Activated CD4-positive, alpha-beta memory T cell treated with anti-CD3 and anti-CD28 coated beads for 36 hours (primary cell): ENCODE measurements at regions of chr11 and their contacts with region 1.

Region 1: DNA sequence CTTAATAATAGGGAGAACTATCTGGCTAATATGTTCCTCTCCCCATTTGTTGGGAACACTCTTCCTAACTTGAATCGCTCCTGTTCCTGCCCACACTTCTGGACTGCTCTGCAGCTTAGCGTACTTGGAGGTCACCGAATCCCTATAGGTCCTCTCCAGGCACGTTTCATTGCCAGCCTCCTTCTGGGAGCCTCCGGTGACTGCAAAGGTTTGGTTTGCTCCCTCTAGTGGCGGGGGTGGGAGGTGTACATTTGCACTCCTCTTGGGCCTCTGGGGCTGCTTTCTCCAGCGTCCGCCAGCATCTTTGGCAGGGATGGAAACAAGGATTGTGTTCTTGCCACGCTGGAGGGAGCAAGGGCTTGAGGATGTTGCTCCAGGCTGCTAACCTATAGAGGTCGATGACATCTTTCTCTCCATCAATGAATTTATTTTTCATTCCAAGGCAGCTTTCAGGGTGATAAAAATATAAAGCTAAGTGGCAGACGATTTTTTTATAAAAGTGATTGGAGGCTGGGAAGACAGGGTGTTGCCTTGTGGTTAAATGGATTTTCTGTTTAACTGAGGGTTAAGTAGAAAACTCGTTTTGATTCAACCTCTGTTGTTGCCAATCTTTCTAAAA is 48.7 kb downstream of the TSPAN18 start:
- DNase-seq: peak; percentile 77
- H3K4me3 Mint-ChIP-seq: no peak overlapping the region
- H3K27ac Mint-ChIP-seq: no peak overlapping the region
- H3K4me1 Mint-ChIP-seq: peaks cover 12% of the 10 kb centered on the region
- H3K27me3 Mint-ChIP-seq: no peaks in the 10 kb centered on the region

Region 2: GRCh38 chr11:44556735-44557409 is 218.6 kb before region 1 on chr11:
- CTCF ChIA-PET with region 1: interaction called, 30 read pairs
- POLR2A ChIA-PET with region 1: no interaction called
- intact Hi-C with region 1: loop called (anchors 2 kb)
- DNase-seq: peak; percentile 79
- H3K4me3 Mint-ChIP-seq: no peak overlapping the region
- H3K27ac Mint-ChIP-seq: no peak overlapping the region
- H3K4me1 Mint-ChIP-seq: peaks cover 29% of the 10 kb centered on the region
- H3K27me3 Mint-ChIP-seq: no peaks in the 10 kb centered on the region

Region 3: DNA sequence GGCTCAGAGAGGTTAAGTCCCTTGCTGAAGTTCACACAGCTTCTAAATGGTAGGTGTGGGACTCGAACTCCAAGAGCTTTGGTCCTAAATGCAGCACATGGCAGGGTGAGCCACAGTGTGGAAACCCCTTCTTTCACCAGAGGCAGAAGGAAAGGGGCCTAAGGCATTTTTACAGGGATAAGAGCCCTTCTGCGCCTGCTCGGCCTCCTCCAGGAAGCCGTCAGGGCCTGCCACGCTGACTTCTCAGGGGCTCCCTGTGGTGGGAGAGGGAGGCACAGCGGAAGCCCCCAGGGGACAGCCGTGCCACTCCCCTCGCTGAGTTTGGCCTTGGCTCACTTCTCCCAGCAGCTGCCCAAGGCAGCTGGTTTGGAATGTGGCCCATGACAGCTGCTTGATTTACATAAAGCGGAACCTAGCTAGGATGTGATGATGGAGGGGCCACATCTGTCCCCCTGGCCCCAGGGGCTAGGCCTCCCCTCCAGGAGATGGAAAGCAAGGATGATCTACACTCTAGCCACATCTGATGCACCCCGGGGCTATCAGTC is 174.6 kb before region 1 on chr11:
- CTCF ChIA-PET with region 1: no interaction called
- POLR2A ChIA-PET with region 1: no interaction called
- intact Hi-C with region 1: no loop called
- DNase-seq: no peak
- H3K4me3 Mint-ChIP-seq: no peak overlapping the region
- H3K27ac Mint-ChIP-seq: peak overlapping the region; percentile 78
- H3K4me1 Mint-ChIP-seq: peaks cover 66% of the 10 kb centered on the region
- H3K27me3 Mint-ChIP-seq: no peaks in the 10 kb centered on the region

Region 4: DNA sequence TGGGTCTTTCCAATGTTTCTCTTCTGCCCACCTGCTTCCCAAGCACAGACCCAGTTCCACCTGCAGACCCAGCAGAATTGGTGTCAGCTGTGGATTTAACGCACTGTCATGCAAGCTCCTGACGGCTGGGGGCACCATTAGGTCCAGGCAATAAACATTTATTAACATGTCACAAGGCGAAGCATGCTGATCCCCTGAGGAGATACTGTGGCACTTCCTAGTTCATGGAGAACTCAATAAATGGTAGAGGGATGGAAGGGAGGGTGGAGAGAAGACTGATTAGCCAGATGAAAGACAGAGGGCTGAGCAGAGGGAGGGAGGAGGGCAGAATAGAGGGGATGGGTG is 117.0 kb before region 1 on chr11:
- CTCF ChIA-PET with region 1: interaction called, 3 read pairs
- POLR2A ChIA-PET with region 1: no interaction called
- intact Hi-C with region 1: loop called (anchors 10 kb)
- DNase-seq: peak; percentile 52
- H3K4me3 Mint-ChIP-seq: no peak overlapping the region
- H3K27ac Mint-ChIP-seq: no peak overlapping the region
- H3K4me1 Mint-ChIP-seq: peaks cover 21% of the 10 kb centered on the region
- H3K27me3 Mint-ChIP-seq: no peaks in the 10 kb centered on the region

Region 5: DNA sequence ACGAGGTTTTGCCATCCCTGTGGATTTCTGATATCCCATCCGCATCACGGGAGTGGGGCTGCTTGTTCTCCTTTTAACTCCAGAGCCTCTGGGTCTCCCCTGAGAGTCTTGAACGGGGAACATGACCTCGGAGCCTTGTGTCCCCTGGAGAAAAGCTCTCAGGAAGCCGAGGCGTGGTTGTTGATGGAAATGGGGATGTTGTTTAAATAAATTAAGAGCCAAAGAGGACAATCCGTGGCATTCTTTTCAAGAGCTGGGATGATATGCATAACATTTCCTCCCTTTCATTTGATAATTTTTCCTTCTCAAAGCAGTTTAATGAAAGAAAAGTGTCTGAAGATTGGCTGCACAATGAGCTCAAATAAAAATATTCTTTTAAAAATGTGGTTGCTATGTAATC is 34.5 kb before region 1 on chr11:
- CTCF ChIA-PET with region 1: interaction called, 16 read pairs
- POLR2A ChIA-PET with region 1: no interaction called
- intact Hi-C with region 1: no loop called
- DNase-seq: no peak
- H3K4me3 Mint-ChIP-seq: no peak overlapping the region
- H3K27ac Mint-ChIP-seq: no peak overlapping the region
- H3K4me1 Mint-ChIP-seq: peaks cover 34% of the 10 kb centered on the region
- H3K27me3 Mint-ChIP-seq: no peaks in the 10 kb centered on the region

Region 6: DNA sequence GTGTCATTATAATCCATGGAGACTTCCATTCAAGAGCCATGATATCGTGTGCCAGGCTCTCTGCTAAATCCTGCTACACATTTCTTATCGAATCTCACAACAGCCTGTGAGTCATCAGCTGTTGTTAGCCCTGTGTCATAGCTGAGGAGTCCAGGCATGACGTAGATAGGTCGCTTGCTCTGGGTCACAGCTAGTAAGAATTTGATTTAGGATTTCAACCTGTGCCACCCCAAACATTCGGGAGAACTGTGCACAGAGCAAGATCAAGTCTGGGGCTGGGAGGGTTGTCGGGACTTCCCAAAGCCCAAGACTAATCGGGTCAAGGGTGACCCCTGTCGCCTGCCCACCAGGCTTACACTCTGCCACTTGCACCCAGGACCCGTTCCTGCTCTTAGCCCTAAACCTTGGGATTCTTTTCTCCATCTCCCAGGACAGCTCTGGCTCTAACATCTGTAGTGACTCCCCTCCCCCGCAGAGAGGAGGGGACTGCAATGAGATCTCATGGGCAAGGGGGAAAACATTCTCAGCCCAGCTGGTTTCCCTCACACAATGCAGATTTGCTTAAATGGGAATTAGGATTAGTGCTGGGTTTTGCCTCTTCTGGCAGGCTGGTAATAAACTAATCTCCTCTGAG is 14.4 kb before region 1 on chr11:
- CTCF ChIA-PET with region 1: interaction called, 36 read pairs
- POLR2A ChIA-PET with region 1: no interaction called
- intact Hi-C with region 1: loop called (anchors 2 kb)
- DNase-seq: no peak
- H3K4me3 Mint-ChIP-seq: no peak overlapping the region
- H3K27ac Mint-ChIP-seq: no peak overlapping the region
- H3K4me1 Mint-ChIP-seq: peaks cover 15% of the 10 kb centered on the region
- H3K27me3 Mint-ChIP-seq: no peaks in the 10 kb centered on the region

Region 7: DNA sequence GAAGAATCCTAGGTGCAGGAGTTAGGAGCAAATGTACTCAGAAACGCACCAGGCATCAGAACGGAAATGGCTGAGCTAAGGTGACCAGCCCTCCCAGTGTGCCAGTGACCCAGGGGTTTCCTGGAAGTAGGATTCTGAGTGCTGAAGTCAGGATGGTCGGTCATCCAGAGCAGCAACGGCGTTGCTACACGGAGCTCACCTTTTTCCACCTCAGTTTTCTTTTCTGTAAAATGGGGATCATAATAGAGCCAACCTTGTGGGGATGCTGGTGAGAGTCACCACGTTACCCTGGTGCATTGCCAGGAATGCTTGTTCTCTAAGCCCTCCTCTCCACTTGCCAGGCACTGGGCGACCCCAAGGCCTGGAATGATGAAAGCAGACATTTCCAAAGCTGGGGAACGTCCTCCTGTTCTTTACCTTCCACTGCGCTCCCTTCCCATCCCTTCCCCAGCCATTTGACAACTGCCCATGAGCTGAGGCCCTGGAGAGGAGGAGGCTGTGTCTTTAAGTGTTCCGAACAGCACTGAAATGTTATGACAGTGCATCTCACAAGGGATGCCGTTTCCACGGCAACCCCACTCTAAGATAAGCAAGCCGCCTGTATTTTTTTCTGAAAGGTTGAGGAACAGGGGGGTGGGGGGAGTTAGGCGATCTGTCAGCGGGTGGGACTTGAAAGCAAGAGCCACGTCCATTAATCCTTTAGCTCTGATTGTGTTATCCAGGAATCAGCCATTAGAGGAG is 18.0 kb after region 1 on chr11:
- CTCF ChIA-PET with region 1: interaction called, 29 read pairs
- POLR2A ChIA-PET with region 1: no interaction called
- intact Hi-C with region 1: no loop called
- DNase-seq: no peak
- H3K4me3 Mint-ChIP-seq: no peak overlapping the region
- H3K27ac Mint-ChIP-seq: no peak overlapping the region
- H3K4me1 Mint-ChIP-seq: no peaks in the 10 kb centered on the region
- H3K27me3 Mint-ChIP-seq: no peaks in the 10 kb centered on the region

Region 8: DNA sequence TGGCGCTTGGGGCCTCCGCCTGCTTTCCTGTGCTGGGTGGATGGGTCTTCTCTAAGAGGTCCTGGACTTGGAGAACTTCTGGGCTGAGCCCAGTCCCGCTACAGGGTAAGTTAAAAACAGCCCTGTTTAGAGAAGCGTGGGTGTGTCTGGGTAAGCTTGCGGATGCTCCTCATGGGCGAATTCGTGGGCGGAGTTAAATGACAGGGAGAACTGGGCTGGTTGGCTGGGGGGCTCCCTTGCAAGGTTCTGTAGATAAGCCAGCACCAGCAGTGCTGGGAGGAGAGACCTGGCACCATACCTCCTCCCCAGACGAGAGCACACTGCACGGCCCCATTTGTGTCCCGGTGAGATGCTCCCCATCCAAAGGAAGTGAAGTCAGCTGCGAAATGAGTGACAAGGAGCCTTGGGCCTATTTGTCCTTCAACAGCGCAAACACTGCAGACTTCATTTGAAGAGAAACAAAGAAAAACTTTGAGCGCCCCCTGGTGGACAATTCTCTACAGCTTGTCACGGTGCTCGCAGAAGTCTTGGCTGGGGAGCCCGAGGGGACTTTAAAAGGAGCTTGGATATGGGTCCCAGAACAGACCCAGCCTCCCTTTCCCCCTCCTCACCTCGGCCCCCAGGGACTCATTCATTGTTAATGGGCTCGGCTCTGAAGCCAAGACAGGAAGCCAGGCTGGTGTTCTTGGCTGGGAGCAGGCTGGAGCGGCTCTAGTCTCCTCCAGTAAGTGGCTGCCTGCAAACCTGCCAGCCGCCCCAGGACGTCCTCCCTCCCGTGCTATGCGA is 135.7 kb after region 1 on chr11:
- CTCF ChIA-PET with region 1: interaction called, 18 read pairs
- POLR2A ChIA-PET with region 1: no interaction called
- intact Hi-C with region 1: no loop called
- DNase-seq: peak; percentile 88
- H3K4me3 Mint-ChIP-seq: no peak overlapping the region
- H3K27ac Mint-ChIP-seq: no peak overlapping the region
- H3K4me1 Mint-ChIP-seq: peaks cover 4% of the 10 kb centered on the region
- H3K27me3 Mint-ChIP-seq: no peaks in the 10 kb centered on the region

Region 9: GRCh38 chr11:44936525-44936924 is 161.1 kb after region 1 on chr11:
- CTCF ChIA-PET with region 1: no interaction called
- POLR2A ChIA-PET with region 1: no interaction called
- intact Hi-C with region 1: no loop called
- DNase-seq: peak; percentile 89
- H3K4me3 Mint-ChIP-seq: no peak overlapping the region
- H3K27ac Mint-ChIP-seq: no peak overlapping the region
- H3K4me1 Mint-ChIP-seq: no peaks in the 10 kb centered on the region
- H3K27me3 Mint-ChIP-seq: no peaks in the 10 kb centered on the region